Mammary epithelial cell (primary cell): ENCODE measurements at regions of chr13 and their contacts with region 1.

Region 1: GRCh38 chr13:34416833-34417425 is 525.1 kb upstream of the NBEA start:
- DNase-seq: no peak
- H3K4me3 ChIP-seq: no peak overlapping the region
- H3K27ac ChIP-seq: no peak overlapping the region
- H3K4me1 ChIP-seq: peaks cover 41% of the 10 kb centered on the region
- H3K27me3 ChIP-seq: no peaks in the 10 kb centered on the region
- CTCF ChIP-seq: no peak

Region 2: DNA sequence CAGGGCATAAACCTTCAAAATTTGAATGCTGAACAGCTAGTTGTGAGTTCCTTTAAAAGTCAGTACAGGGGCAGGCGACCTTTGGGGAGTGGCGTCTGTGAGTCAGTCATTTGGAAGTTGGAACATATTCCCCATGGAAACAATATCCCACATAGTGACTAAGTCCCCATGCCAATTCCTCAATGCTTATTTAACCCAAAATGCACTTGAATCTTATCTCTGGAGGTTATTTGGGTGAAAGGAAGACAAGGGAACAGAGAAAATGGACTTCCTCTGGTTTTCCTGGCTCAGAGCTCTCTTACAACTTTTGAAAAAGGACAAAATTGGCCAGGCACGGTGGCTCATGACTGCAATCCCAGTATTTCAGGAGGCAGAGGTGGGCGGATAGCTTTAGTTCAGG is 45.9 kb after region 1 on chr13:
- CTCF ChIA-PET with region 1: no interaction called
- dilution Hi-C with region 1: loop called (anchors 10 kb)
- in situ Hi-C with region 1: no loop called
- intact Hi-C with region 1: no loop called
- DNase-seq: peak; percentile 89
- H3K4me3 ChIP-seq: no peak overlapping the region
- H3K27ac ChIP-seq: peak overlapping the region; percentile 76
- H3K4me1 ChIP-seq: peaks cover 27% of the 10 kb centered on the region
- H3K27me3 ChIP-seq: no peaks in the 10 kb centered on the region
- CTCF ChIP-seq: no peak

Region 3: DNA sequence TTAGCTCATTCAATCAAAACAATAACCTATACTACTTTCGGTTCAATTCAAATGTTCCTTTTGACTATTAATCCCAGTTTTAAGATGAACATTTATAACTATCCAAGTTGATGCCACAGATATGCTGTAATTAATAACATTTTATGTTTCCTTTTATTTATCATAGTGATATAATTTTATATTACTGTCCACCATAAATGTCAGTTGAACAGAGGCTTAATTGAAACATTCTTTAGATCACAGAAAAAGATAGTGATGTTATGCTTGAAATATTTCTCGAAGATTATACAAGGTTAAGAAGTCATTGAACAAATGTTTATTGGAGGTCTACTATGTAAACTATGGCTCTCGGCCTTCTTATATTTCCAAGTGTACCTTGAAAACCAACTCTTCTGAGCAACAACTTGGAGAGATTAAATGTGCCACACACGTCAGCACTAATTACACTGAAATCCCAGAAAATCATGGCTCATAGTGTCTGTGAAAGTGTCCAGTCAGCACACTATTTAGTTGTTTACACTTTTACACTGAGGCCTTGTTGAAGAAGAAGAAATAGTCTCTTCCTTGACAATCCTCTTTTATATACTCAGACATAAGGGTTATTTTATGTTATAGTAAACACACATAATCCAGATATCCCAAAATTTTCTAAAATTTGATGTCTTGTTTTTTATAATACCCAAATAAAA is 494.1 kb after region 1 on chr13:
- CTCF ChIA-PET with region 1: interaction called, 10 read pairs
- dilution Hi-C with region 1: no loop called
- in situ Hi-C with region 1: no loop called
- intact Hi-C with region 1: no loop called
- DNase-seq: no peak
- H3K4me3 ChIP-seq: no peak overlapping the region
- H3K27ac ChIP-seq: no peak overlapping the region
- H3K4me1 ChIP-seq: no peaks in the 10 kb centered on the region
- H3K27me3 ChIP-seq: peaks cover 2% of the 10 kb centered on the region
- CTCF ChIP-seq: no peak

Region 4: GRCh38 chr13:35129500-35129899 is 712.6 kb after region 1 on chr13:
- CTCF ChIA-PET with region 1: no interaction called
- dilution Hi-C with region 1: no loop called
- in situ Hi-C with region 1: no loop called
- intact Hi-C with region 1: loop called (anchors 5 kb)
- DNase-seq: no peak
- H3K4me3 ChIP-seq: no peak overlapping the region
- H3K27ac ChIP-seq: no peak overlapping the region
- H3K4me1 ChIP-seq: no peaks in the 10 kb centered on the region
- H3K27me3 ChIP-seq: no peaks in the 10 kb centered on the region
- CTCF ChIP-seq: no peak